ENCODE measurements at regions of chr3 and their contacts with region 1.

Region 1: GRCh38 chr3:32374788-32375595 is 16.7 kb upstream of the CMTM7 start:
- DNase-seq: peak; percentile 62
- CTCF ChIP-seq: peak; percentile 64

Region 2: GRCh38 chr3:32240159-32240545 is 134.8 kb before region 1 on chr3:
- CTCF ChIA-PET with region 1: no interaction called
- POLR2A ChIA-PET with region 1: no interaction called
- DNase-seq: peak; percentile 35
- CTCF ChIP-seq: peak; percentile 20

Region 3: DNA sequence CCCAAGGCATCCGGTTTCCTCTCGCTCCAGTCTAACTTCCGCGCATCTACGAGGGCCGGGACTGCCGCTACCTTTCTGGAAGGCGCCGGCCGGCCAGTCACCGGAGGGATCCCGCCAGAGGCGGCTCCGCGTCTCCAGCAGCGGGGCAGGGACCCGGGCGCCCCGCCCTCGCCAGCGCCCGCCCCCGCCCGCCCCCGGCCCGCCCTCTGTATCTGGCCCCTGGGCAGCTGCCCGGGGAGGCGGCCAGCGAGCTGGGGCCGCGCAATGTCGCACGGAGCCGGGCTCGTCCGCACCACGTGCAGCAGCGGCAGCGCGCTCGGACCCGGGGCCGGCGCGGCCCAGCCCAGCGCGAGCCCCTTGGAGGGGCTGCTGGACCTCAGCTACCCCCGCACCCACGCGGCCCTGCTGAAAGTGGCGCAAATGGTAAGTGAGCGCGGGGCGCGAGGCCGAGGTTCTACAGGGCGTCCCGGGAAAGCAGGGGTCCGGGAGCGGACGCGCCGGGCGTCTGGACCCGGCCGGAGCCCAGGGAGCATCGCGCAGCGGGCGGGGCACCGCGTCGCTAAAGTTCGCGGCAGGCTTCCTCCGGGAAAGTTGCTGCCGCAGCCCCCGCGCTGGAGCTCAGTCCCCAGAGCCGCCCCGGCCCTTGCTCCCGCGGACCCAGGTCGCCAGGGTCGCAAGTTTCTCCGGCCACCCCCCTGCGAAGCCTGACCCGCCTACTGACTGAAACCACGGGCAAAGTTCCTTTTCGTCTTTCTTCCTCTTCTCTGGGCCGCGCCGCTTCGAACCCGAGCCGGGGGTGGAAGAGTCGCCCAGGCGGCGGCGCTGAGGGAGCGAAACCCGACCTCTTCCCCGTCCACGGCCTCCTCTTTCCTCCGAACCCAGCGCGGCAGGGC is 16.9 kb after region 1 on chr3 and contains the start of gene CMTM7:
- CTCF ChIA-PET with region 1: interaction called, 61 read pairs
- POLR2A ChIA-PET with region 1: no interaction called
- DNase-seq: peak; percentile 59
- CTCF ChIP-seq: peak; percentile 17

Region 4: GRCh38 chr3:32401556-32402081 is 26.6 kb after region 1 on chr3:
- CTCF ChIA-PET with region 1: interaction called, 16 read pairs
- POLR2A ChIA-PET with region 1: no interaction called
- DNase-seq: peak; percentile 65
- CTCF ChIP-seq: no peak

Region 5: GRCh38 chr3:32414520-32415202 is 39.7 kb after region 1 on chr3:
- CTCF ChIA-PET with region 1: interaction called, 28 read pairs
- POLR2A ChIA-PET with region 1: no interaction called
- DNase-seq: no peak
- CTCF ChIP-seq: no peak

Region 6: GRCh38 chr3:32420126-32421038 is 45.4 kb after region 1 on chr3:
- CTCF ChIA-PET with region 1: interaction called, 28 read pairs
- POLR2A ChIA-PET with region 1: no interaction called
- DNase-seq: peak; percentile 78
- CTCF ChIP-seq: no peak

Region 7: GRCh38 chr3:32438596-32439344 is 63.8 kb after region 1 on chr3:
- CTCF ChIA-PET with region 1: interaction called, 13 read pairs
- POLR2A ChIA-PET with region 1: interaction called, 5 read pairs
- DNase-seq: peak; percentile 85
- CTCF ChIP-seq: no peak

Region 8: DNA sequence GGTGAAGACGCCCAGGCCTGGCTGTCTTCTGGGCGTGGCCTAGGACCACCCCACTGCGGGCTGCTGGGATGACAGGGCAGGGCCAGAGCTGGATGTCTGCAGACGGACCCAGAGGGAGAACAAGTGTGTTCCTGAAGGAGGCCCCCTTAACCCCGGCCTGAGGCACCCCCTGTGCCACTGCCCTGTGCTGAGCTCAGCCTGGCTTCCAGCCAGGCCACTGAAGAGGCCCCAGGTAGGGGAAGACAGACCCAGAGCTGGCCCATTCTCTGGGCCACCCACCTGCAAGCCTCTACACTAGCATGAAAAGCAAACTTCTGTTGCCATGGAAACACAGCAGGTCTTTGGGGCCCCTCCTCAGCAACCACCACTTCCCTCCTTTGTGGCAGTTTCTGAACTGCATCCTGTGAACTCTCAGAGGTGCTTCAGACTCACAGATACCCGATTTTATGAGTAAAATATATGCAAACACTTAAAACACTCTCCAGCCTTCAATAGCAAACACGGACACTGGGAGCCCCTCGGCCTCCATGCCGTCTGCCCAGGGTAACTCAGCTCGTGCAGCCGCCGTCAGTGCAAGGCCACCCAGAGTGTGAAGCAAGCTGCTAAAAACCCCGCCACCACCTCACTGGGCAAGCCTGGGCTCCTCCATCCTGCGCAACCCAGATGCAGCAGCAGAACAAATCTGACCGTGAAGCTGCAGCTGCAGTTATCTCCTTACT is 85.2 kb after region 1 on chr3:
- CTCF ChIA-PET with region 1: interaction called, 18 read pairs
- POLR2A ChIA-PET with region 1: no interaction called
- DNase-seq: peak; percentile 84
- CTCF ChIP-seq: no peak

Measured in GM10248 (cell line).